ENCODE measurements at regions of chr1 and their contacts with region 1.

Region 1: GRCh38 chr1:201649761-201650622 is 111.1 kb downstream of the NAV1 start:
- DNase-seq: peak; percentile 44 to 49
- ATAC-seq: peak; percentile 36 to 37
- H3K4me3 ChIP-seq: peak overlapping the region; percentile 48 to 62 (median 58)
- H3K27ac ChIP-seq: peak overlapping the region; percentile 51 to 63 (median 58)
- H3K4me1 ChIP-seq: peaks cover 20 to 30% of the 10 kb centered on the region in 2 donors
- H3K27me3 ChIP-seq: peaks cover 12 to 25% (median 21%) of the 10 kb centered on the region in 3 donors
- CTCF ChIP-seq: no peak
- POLR2A ChIP-seq: peak in 1 of 2 donors; percentile 26

Region 2: GRCh38 chr1:201696217-201696761 is 46.3 kb after region 1 on chr1:
- in situ Hi-C with region 1: no loop called
- intact Hi-C with region 1: loop called (anchors 5 kb)
- DNase-seq: peak; percentile 94 to 96
- ATAC-seq: peak; percentile 97 to 98
- H3K4me3 ChIP-seq: no peak overlapping the region
- H3K27ac ChIP-seq: peak overlapping the region; percentile 4 to 50 (median 34)
- H3K4me1 ChIP-seq: peaks cover 27 to 39% of the 10 kb centered on the region in 2 donors
- H3K27me3 ChIP-seq: no peaks in the 10 kb centered on the region
- CTCF ChIP-seq: no peak
- POLR2A ChIP-seq: no peak